SK-N-SH (cell line): ENCODE measurements at regions of chr2 and their contacts with region 1.

Region 1: DNA sequence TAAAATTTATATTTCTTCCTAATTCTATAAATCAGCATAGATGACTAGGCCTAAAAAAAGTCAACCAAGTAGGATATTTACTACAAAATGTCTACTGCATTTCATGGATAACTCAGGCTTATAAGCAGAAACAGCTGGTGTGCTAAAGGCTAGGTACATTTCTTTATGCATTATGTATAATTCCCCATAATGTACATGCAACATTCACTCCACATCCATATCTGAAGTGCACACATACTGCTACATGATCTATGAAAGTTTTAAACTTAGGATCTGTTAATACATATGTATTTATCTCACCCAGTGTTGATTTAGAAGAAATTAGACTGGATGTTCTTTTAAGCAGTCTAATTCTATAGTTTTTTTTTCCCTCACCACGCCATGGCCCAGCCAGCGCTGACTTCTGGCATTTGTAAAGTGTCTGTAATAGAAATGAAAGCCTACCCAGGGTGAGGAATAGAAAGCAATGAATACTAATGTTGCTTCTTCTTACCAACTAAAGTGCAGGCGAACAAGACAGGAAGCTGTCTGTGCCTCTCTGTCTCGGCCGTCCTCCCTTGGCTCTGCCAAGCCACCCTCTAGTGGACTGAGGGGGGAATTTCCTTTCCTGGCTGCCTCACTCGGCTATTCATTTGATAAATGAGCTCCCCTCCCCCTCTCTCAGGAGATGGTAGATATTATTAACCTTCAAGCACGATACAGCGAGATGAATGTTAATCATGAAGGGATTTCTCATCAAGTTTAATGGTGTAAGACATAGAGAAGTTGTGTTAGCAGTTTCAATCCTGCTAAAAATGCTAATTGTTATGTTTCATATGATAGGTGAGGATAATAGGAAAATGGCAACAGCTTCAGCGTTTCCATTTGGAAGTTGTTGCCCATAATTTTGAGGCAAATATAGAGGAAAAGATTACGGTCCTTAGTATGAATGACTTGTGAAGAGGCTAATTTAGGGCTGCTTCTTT is 384.5 kb downstream of the MTX2 start:
- DNase-seq: peak; percentile 61
- H3K4me3 ChIP-seq: peak overlapping the region in 1 of 2 experiments; percentile 18; a peak in 1 of 4 replicates
- H3K27ac ChIP-seq: peak overlapping the region; percentile 25 to 80; a peak in 3 of 4 replicates
- H3K4me1 ChIP-seq: peaks cover 8 to 41% of the 10 kb centered on the region in 2 experiments; a peak in 3 of 4 replicates
- H3K27me3 ChIP-seq: no peaks in the 10 kb centered on the region
- CTCF ChIP-seq: peak; percentile 75
- EP300 ChIP-seq: no peak
- RAD21 ChIP-seq: peak; percentile 76

Region 2: GRCh38 chr2:176370467-176371171 is 283.1 kb before region 1 on chr2:
- CTCF ChIA-PET with region 1: no interaction called
- POLR2A ChIA-PET with region 1: no interaction called
- DNase-seq: no peak
- H3K4me3 ChIP-seq: no peak overlapping the region
- H3K27ac ChIP-seq: no peak overlapping the region
- H3K4me1 ChIP-seq: no peaks in the 10 kb centered on the region
- H3K27me3 ChIP-seq: no peaks in the 10 kb centered on the region
- CTCF ChIP-seq: no peak
- EP300 ChIP-seq: no peak
- RAD21 ChIP-seq: no peak

Region 3: GRCh38 chr2:176454893-176455811 is 198.6 kb before region 1 on chr2:
- CTCF ChIA-PET with region 1: interaction called, 22 read pairs
- POLR2A ChIA-PET with region 1: no interaction called
- DNase-seq: peak; percentile 64
- H3K4me3 ChIP-seq: no peak overlapping the region; a peak in 1 of 4 replicates
- H3K27ac ChIP-seq: peak overlapping the region in 1 of 2 experiments; percentile 78; a peak in 2 of 4 replicates
- H3K4me1 ChIP-seq: peaks cover 0 to 16% of the 10 kb centered on the region in 2 experiments; a peak in 2 of 4 replicates
- H3K27me3 ChIP-seq: no peaks in the 10 kb centered on the region
- CTCF ChIP-seq: peak; percentile 94
- EP300 ChIP-seq: no peak
- RAD21 ChIP-seq: peak; percentile 88

Region 4: DNA sequence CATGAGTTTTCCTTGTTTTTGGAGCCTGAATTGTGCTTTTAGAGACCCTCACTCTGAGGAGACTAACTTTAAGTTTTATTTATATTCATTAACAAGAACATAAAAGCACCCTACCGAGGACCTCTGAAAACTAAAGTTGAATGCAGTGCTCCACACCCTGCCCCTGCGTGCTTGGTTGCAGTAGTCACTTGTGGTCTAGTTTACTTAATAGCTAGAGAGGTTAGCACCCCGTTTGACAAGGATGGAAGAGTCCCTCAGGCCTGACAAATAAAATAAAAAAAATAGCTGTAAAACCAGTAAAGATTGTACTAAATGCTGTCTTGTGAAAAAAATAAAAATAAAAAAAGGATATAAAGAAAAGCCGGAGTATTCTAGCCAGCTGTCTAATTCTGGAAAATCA is 10.7 kb after region 1 on chr2:
- CTCF ChIA-PET with region 1: interaction called, 93 read pairs
- POLR2A ChIA-PET with region 1: interaction called, 4 read pairs
- DNase-seq: no peak
- H3K4me3 ChIP-seq: no peak overlapping the region
- H3K27ac ChIP-seq: no peak overlapping the region
- H3K4me1 ChIP-seq: peaks cover 0 to 14% of the 10 kb centered on the region in 2 experiments; a peak in 3 of 4 replicates
- H3K27me3 ChIP-seq: no peaks in the 10 kb centered on the region
- CTCF ChIP-seq: no peak
- EP300 ChIP-seq: no peak
- RAD21 ChIP-seq: no peak

Region 5: GRCh38 chr2:176682278-176682677 is 28.5 kb after region 1 on chr2:
- CTCF ChIA-PET with region 1: interaction called, 11 read pairs
- POLR2A ChIA-PET with region 1: no interaction called
- DNase-seq: no peak
- H3K4me3 ChIP-seq: no peak overlapping the region; a peak in 1 of 4 replicates
- H3K27ac ChIP-seq: peak overlapping the region in 1 of 2 experiments; percentile 80; a peak in 1 of 4 replicates
- H3K4me1 ChIP-seq: peaks cover 0 to 44% of the 10 kb centered on the region in 2 experiments; a peak in 2 of 4 replicates
- H3K27me3 ChIP-seq: no peaks in the 10 kb centered on the region
- CTCF ChIP-seq: no peak
- EP300 ChIP-seq: no peak
- RAD21 ChIP-seq: no peak

Region 6: GRCh38 chr2:176814306-176815052 is 160.7 kb after region 1 on chr2:
- CTCF ChIA-PET with region 1: interaction called, 155 read pairs
- POLR2A ChIA-PET with region 1: no interaction called
- DNase-seq: peak; percentile 31
- H3K4me3 ChIP-seq: no peak overlapping the region
- H3K27ac ChIP-seq: no peak overlapping the region
- H3K4me1 ChIP-seq: peaks cover 2 to 5% of the 10 kb centered on the region in 2 experiments; a peak in 2 of 4 replicates
- H3K27me3 ChIP-seq: no peaks in the 10 kb centered on the region
- CTCF ChIP-seq: peak; percentile 63
- EP300 ChIP-seq: no peak
- RAD21 ChIP-seq: peak; percentile 78

Region 7: GRCh38 chr2:176852667-176853066 is 198.9 kb after region 1 on chr2:
- CTCF ChIA-PET with region 1: no interaction called
- POLR2A ChIA-PET with region 1: no interaction called
- DNase-seq: no peak
- H3K4me3 ChIP-seq: no peak overlapping the region
- H3K27ac ChIP-seq: no peak overlapping the region
- H3K4me1 ChIP-seq: peaks cover 0 to 12% of the 10 kb centered on the region in 2 experiments; a peak in 2 of 4 replicates
- H3K27me3 ChIP-seq: no peaks in the 10 kb centered on the region
- CTCF ChIP-seq: no peak
- EP300 ChIP-seq: no peak
- RAD21 ChIP-seq: no peak